ENCODE measurements at regions of chr1 and their contacts with region 1.

Region 1: DNA sequence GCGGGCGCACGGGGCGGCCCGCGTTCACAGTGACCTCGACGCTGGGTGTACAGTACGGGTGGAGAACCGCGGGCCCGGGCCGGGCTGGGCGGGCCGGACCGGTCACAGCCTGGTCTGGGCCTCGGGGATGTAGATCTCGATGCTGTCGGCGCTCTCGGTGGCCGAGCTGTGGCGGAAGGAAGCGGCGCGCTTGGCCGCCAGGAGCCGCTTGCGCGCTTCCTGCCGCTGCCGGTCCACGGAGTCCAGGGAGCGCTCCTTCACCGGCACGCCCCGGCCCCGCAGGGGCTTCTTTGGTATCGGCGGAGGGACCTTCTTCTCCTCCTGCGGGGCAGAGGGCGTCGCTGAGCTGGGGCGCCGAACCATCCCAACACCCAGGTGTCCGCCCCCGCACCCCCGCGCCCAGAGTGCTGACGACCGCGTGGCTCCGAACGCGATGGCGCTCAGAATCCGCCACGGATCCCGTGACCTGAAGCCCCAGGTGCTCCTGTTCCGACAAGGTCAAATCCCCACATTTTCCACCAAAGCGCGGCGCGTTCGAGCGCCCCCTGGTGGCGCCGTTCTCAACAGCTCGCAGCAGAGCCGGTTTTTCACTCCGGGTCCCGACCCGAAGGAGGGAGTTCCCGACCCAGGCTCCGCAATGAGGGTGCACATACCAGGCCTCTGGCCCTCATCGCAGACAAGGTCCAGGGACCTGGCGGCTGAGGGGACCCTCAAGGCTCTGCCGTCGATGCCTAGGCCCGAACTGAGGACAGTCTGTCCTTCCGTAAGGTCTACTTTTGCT is 6.6 kb upstream of the SMIM12 start:
- DNase-seq: peak; percentile 98
- H3K4me3 Mint-ChIP-seq: peak overlapping the region; percentile 82
- H3K27ac Mint-ChIP-seq: peak overlapping the region; percentile 90
- H3K4me1 Mint-ChIP-seq: peaks cover 19% of the 10 kb centered on the region
- H3K27me3 Mint-ChIP-seq: peaks cover 12% of the 10 kb centered on the region

Region 2: GRCh38 chr1:34786521-34787325 is 79.4 kb before region 1 on chr1:
- intact Hi-C with region 1: loop called (anchors 1 kb)
- DNase-seq: peak; percentile 88
- H3K4me3 Mint-ChIP-seq: no peak overlapping the region
- H3K27ac Mint-ChIP-seq: no peak overlapping the region
- H3K4me1 Mint-ChIP-seq: peaks cover 11% of the 10 kb centered on the region
- H3K27me3 Mint-ChIP-seq: peaks cover 17% of the 10 kb centered on the region

Region 3: DNA sequence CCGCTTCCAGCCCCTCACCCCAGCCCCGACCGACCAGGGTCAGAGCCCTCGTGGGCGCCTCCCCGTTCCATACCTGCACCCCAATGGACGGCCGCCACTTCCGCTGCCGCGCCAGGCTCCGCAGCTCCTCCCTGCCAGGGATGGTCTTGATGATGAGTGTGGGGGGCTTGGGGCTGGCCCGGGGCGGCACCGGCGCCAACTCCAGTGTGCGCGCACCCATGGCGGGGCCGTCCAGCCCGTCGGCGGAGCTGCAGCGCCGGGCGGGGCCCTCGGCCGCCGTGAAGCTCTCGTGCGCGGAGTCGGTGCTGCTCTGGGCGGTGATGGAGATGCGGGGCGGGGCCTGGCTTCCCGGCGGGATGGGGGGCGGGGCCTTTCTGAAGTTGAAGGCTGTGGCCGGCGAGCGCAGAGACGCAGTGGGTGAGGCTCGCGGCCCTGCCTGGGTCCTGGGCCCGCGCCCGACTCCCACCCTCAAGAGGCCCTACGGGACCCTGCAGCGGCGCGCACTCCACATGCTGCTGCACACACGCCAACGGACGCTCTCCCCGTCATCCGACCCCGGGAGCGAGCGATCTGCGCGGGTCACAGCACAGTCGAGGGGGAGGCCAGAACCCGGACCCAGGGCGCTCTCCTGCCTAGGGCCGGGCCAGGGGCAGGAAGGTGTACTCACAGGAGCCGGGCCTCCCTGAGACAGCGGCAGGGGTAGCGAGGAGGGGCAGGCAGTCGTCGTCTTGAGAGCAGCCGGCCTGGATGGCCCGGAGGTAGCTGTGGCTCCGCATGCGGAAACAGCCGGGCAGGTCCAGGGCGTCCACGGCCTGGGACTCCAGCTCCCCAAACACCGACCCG is 19.5 kb after region 1 on chr1:
- intact Hi-C with region 1: no loop called
- DNase-seq: peak; percentile 86
- H3K4me3 Mint-ChIP-seq: peak overlapping the region; percentile 76
- H3K27ac Mint-ChIP-seq: no peak overlapping the region
- H3K4me1 Mint-ChIP-seq: peaks cover 3% of the 10 kb centered on the region
- H3K27me3 Mint-ChIP-seq: peaks cover 46% of the 10 kb centered on the region

Region 4: DNA sequence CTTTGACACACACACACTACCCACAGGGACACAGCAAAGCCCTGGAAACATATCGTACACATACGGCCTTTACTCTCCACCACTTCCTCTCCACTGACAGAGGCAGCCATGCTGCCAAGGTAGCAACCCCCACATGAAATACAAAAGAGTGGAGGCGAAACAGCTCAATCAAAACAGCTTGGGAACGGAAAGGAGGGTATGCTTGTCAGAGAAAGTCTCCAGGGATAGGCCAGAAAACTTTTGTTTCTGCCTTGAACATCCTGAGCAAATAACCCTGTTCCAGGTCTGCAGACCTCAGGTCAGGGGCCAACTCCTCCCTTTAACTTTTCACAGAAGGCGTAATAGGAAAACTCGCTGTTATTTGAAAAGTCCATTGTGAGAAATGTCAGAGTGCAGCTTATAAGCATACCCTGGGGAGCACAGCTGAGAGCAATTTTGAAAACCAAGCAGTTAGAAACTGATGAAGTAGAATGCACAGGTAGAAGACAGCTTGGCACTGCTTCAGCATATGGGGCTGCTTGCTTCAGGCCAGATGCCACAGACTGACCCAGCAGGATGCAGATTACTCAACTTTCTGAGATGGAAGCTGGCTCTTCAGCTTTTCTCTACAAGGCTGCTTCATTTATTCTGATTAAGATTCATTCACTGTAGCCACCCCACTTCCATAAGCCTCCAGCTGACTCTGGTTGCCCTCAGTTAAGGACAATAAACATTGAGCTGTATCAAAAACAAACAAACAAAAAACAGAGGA is 673.1 kb after region 1 on chr1:
- intact Hi-C with region 1: no loop called
- DNase-seq: peak; percentile 87
- H3K4me3 Mint-ChIP-seq: peak overlapping the region; percentile 75
- H3K27ac Mint-ChIP-seq: peak overlapping the region; percentile 86
- H3K4me1 Mint-ChIP-seq: peaks cover 58% of the 10 kb centered on the region
- H3K27me3 Mint-ChIP-seq: no peaks in the 10 kb centered on the region

Measured in activated CD4-positive, alpha-beta T cell treated with anti-CD3 and anti-CD28 coated beads, Interleukin-2, amount 10 ng/mL, durations not matched to agents 24 days and 14 days (primary cell).